CD4-positive, alpha-beta T cell (primary cell): ENCODE measurements at regions of chr1 and their contacts with region 1.

Region 1: DNA sequence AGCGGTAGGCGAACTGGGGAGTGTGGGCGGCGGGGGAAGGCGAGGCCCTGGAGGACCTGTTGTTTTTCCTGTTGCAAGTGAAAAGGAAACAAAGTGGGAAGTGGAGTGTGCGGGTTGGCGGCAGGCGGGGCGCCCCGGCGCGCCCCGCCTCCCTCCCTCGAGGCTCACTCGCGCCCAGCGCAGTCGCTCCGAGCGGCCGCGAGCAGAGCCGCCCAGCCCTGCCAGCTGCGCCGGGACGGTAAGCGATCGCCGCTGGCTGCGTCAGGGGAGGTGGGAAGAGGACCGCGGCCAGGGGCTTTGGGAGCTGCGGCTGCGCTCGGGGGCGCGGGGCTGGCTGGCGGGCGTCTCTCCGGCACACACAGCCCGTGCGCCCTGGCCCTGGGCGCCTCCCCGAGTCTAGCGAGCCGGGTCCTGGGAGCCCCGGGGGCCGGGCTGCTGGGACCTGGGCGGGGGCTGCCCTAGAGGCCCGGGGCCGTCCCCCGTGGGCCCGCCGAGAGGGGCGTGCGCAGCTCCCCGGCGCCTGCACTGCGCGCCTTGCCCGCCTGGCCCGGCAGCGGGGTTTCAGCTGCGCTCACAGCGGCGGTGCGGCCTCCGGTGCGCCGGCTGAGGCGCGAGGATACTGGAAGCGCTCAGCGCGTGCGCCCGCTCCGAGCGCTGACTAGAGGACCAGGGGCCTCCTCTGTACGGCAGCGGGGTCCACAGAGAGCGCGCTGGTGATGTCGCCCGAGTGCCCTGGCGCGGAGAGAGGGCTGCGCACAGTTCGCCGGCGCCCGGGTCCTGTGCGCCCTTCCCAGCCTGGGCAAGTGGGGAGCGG is at the start of gene PIK3CD:
- DNase-seq: peak in 13 of 14 experiments; percentile 11 to 74 (median 46)
- ATAC-seq: peak; percentile 43
- H3K4me3 ChIP-seq: peak within 1 kb of the TSS; percentile 93
- H3K4me3 Mint-ChIP-seq: peak within 1 kb of the TSS; percentile 100
- H3K27ac ChIP-seq: peak within 1 kb of the TSS; percentile 61 to 88
- H3K27ac Mint-ChIP-seq: peak within 1 kb of the TSS; percentile 97
- H3K4me1 ChIP-seq: peaks cover 76% of the 10 kb centered on the region
- H3K4me1 Mint-ChIP-seq: peaks cover 73% of the 10 kb centered on the region
- H3K27me3 ChIP-seq: no peaks in the 10 kb centered on the region
- H3K27me3 Mint-ChIP-seq: no peaks in the 10 kb centered on the region
- CTCF ChIP-seq: no peak
- total RNA-seq, gene PIK3CD: 202 to 213 TPM

Region 2: GRCh38 chr1:9671377-9672140 is 19.8 kb after region 1 on chr1:
- CTCF ChIA-PET with region 1: no interaction called
- POLR2A ChIA-PET with region 1: interaction called, 61 read pairs
- intact Hi-C with region 1: no loop called
- DNase-seq: peak in 1 of 14 experiments; percentile 34
- ATAC-seq: peak; percentile 77
- H3K4me3 ChIP-seq: no peak overlapping the region
- H3K4me3 Mint-ChIP-seq: peak overlapping the region; percentile 7
- H3K27ac ChIP-seq: no peak overlapping the region
- H3K27ac Mint-ChIP-seq: peak overlapping the region; percentile 84
- H3K4me1 ChIP-seq: peaks cover 70% of the 10 kb centered on the region
- H3K4me1 Mint-ChIP-seq: peaks cover 62% of the 10 kb centered on the region
- H3K27me3 ChIP-seq: no peaks in the 10 kb centered on the region
- H3K27me3 Mint-ChIP-seq: no peaks in the 10 kb centered on the region
- CTCF ChIP-seq: no peak

Region 3: DNA sequence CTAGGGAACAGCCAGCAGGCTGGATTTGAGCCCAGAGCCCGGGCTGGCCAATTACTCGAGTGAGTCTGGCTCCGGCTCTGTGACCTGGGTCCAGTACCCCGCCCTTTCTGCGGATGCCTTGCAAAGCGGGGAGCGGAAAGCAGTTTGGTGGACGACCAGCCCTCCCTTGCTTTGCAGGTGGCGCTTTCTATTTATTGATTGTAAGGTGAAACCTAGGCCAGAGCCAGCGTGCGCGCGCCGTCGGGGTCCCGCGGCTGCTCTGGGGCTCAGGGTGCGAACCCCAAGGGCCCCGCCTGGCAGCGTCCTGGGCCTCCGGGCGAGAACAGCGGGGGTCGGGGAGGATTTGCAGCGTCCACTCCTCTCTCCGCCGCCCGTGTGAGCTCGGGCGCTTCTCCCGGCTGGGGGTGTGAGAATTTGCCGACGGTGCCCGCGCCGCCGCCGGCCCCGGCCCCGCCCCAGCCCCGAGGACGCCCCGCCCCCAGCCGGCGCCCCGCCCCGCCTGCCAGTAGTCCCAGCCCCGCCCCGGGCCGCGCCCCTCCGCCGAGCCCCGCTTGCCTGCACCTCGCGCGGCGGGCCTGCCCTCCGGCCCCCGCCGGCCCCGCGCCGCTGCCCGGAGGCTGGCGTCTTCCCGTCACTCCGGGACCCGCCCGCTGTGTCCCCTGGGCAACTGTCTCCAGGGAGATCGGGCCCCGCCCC is 37.4 kb after region 1 on chr1:
- CTCF ChIA-PET with region 1: interaction called, 5 read pairs
- POLR2A ChIA-PET with region 1: interaction called, 201 read pairs
- intact Hi-C with region 1: loop called (anchors 1 to 2 kb)
- DNase-seq: peak; percentile 76 to 92 (median 83)
- ATAC-seq: peak; percentile 78
- H3K4me3 ChIP-seq: peak overlapping the region; percentile 61
- H3K4me3 Mint-ChIP-seq: peak overlapping the region; percentile 88
- H3K27ac ChIP-seq: peak overlapping the region in 1 of 2 donors; percentile 40
- H3K27ac Mint-ChIP-seq: peak overlapping the region; percentile 74
- H3K4me1 ChIP-seq: peaks cover 76% of the 10 kb centered on the region
- H3K4me1 Mint-ChIP-seq: peaks cover 76% of the 10 kb centered on the region
- H3K27me3 ChIP-seq: no peaks in the 10 kb centered on the region
- H3K27me3 Mint-ChIP-seq: no peaks in the 10 kb centered on the region
- CTCF ChIP-seq: no peak

Region 4: DNA sequence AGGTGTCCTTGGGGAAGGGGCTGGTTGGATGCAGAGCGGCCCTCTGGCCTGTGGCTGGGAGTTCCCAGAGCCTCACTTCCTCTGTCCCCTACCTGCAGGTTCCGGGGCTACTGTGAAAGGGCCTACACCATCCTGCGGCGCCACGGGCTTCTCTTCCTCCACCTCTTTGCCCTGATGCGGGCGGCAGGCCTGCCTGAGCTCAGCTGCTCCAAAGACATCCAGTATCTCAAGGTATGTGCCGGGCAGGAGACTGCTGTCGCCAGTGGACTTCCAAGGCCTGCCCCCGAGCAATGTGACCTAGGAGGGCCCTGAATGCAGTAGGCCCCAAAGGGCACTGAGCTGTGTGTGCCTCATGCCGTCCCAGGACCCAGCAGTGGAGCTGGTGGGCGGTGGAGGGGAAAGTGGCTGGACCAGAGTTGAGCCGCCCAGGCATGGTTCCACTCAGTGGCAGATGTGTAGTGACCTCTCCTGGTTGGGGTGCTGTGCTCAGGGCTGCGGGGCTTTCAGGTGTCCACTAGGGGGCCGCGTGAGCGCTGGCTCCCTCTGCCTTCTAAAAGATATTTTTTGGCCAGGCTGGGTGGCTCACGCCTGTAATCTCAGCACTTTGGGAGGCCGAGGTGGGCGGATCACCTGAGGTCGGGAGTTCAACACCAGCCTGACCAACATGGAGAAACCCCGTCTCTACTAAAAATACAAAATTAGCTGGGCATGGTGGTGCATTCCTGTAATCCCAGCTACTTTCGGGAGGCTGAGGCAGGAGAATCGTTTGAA is 73.1 kb after region 1 on chr1:
- CTCF ChIA-PET with region 1: interaction called, 7 read pairs
- POLR2A ChIA-PET with region 1: interaction called, 228 read pairs
- intact Hi-C with region 1: loop called in 1 of 2 experiments (anchors 2 kb)
- DNase-seq: peak; percentile 52 to 86 (median 68)
- ATAC-seq: peak; percentile 50
- H3K4me3 ChIP-seq: no peak overlapping the region
- H3K4me3 Mint-ChIP-seq: peak overlapping the region; percentile 35
- H3K27ac ChIP-seq: peak overlapping the region in 1 of 2 donors; percentile 34
- H3K27ac Mint-ChIP-seq: peak overlapping the region; percentile 84
- H3K4me1 ChIP-seq: peaks cover 92% of the 10 kb centered on the region
- H3K4me1 Mint-ChIP-seq: peaks cover 58% of the 10 kb centered on the region
- H3K27me3 ChIP-seq: no peaks in the 10 kb centered on the region
- H3K27me3 Mint-ChIP-seq: no peaks in the 10 kb centered on the region
- CTCF ChIP-seq: peak; percentile 92